Caco-2 (cell line): ENCODE measurements at regions of chr1 and their contacts with region 1.

Region 1: GRCh38 chr1:220776720-220777326 is 9.9 kb upstream of the MTARC1 start:
- DNase-seq: peak; percentile 80 to 89
- H3K4me3 ChIP-seq: no peak overlapping the region
- H3K4me3 Mint-ChIP-seq: no peak overlapping the region
- H3K27ac Mint-ChIP-seq: no peak overlapping the region
- H3K4me1 ChIP-seq: no peaks in the 10 kb centered on the region
- H3K4me1 Mint-ChIP-seq: no peaks in the 10 kb centered on the region
- H3K27me3 ChIP-seq: no peaks in the 10 kb centered on the region
- H3K27me3 Mint-ChIP-seq: no peaks in the 10 kb centered on the region
- CTCF ChIP-seq: peak; percentile 96 to 97

Region 2: DNA sequence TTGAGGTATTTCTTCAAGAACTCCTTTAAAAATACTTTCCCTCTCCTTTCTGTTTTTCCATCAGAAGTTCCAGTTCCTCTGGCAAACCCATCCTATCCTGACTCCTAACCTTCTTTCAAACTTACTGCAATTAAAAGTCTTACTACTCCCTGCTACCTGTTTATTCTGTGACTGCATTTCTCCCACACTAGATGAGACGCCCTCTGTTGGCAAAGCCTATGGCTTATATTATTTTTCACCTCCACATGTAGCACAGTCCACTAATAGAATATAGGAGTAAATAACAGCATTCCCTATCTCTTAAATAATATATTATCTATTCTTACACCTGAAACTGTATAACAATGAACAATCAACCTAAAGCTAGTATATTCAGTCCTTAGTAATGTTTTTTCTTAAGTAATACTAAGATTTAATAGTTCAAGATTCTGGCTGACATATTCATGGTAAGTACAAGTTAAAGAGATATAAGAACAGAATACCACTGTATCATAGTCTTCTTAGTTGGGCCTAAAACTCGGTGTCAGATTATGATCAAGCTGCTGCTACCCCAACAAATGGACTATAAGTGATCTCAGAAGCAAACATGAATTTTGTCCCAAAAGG is 559.3 kb before region 1 on chr1:
- CTCF ChIA-PET with region 1: no interaction called
- POLR2A ChIA-PET with region 1: no interaction called
- intact Hi-C with region 1: loop called (anchors 10 kb)
- DNase-seq: peak in 1 of 2 experiments; percentile 45
- H3K4me3 ChIP-seq: no peak overlapping the region
- H3K4me3 Mint-ChIP-seq: no peak overlapping the region
- H3K27ac Mint-ChIP-seq: no peak overlapping the region
- H3K4me1 ChIP-seq: 0 out of 2 replicates have a peak, but pooled peaks cover 3% of the 10 kb centered on the region
- H3K4me1 Mint-ChIP-seq: no peaks in the 10 kb centered on the region
- H3K27me3 ChIP-seq: no peaks in the 10 kb centered on the region
- H3K27me3 Mint-ChIP-seq: no peaks in the 10 kb centered on the region
- CTCF ChIP-seq: peak in 1 of 2 experiments; percentile 61

Region 3: DNA sequence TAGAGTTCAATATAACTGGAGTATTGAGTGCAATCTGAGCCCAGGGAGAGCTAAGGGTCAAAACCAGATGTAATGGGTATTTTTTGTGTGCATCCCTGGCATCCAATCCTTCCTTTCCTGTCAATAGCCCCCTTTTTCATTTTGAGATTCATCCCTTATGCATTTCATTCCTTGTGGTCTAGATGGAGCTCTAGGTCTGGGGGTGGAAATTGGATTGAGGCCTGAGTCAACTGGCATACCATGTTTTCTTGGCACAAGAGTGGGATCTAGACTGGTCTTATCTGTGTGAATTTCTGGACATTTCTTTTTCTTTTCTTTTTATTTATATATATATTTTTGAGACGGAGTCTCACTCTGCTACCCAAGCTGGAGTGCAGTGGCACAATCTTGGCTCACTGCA is 437.2 kb before region 1 on chr1:
- CTCF ChIA-PET with region 1: no interaction called
- POLR2A ChIA-PET with region 1: no interaction called
- intact Hi-C with region 1: loop called (anchors 1 kb)
- DNase-seq: no peak
- H3K4me3 ChIP-seq: no peak overlapping the region
- H3K4me3 Mint-ChIP-seq: no peak overlapping the region
- H3K27ac Mint-ChIP-seq: no peak overlapping the region
- H3K4me1 ChIP-seq: 0 out of 2 replicates have a peak, but pooled peaks cover 8% of the 10 kb centered on the region
- H3K4me1 Mint-ChIP-seq: no peaks in the 10 kb centered on the region
- H3K27me3 ChIP-seq: no peaks in the 10 kb centered on the region; the same call in 1 of the 2 replicates
- H3K27me3 Mint-ChIP-seq: peaks cover 4% of the 10 kb centered on the region
- CTCF ChIP-seq: no peak

Region 4: GRCh38 chr1:220680085-220680687 is 96.6 kb before region 1 on chr1:
- CTCF ChIA-PET with region 1: interaction called, 4 read pairs
- POLR2A ChIA-PET with region 1: no interaction called
- intact Hi-C with region 1: loop called (anchors 1 kb)
- DNase-seq: peak in 1 of 2 experiments; percentile 59
- H3K4me3 ChIP-seq: no peak overlapping the region
- H3K4me3 Mint-ChIP-seq: no peak overlapping the region
- H3K27ac Mint-ChIP-seq: no peak overlapping the region
- H3K4me1 ChIP-seq: no peaks in the 10 kb centered on the region
- H3K4me1 Mint-ChIP-seq: no peaks in the 10 kb centered on the region
- H3K27me3 ChIP-seq: no peaks in the 10 kb centered on the region
- H3K27me3 Mint-ChIP-seq: peaks cover 4% of the 10 kb centered on the region
- CTCF ChIP-seq: peak; percentile 77 to 90

Region 5: GRCh38 chr1:220733090-220733601 is 43.7 kb before region 1 on chr1:
- CTCF ChIA-PET with region 1: interaction called, 15 read pairs
- POLR2A ChIA-PET with region 1: no interaction called
- intact Hi-C with region 1: loop called (anchors 1 kb)
- DNase-seq: peak; percentile 82 to 87
- H3K4me3 ChIP-seq: no peak overlapping the region
- H3K4me3 Mint-ChIP-seq: no peak overlapping the region
- H3K27ac Mint-ChIP-seq: peak overlapping the region; percentile 24
- H3K4me1 ChIP-seq: peaks cover 22% of the 10 kb centered on the region
- H3K4me1 Mint-ChIP-seq: peaks cover 6% of the 10 kb centered on the region
- H3K27me3 ChIP-seq: no peaks in the 10 kb centered on the region
- H3K27me3 Mint-ChIP-seq: no peaks in the 10 kb centered on the region
- CTCF ChIP-seq: peak; percentile 87 to 89